CD4-positive, alpha-beta T cell (primary cell): ENCODE measurements at regions of chr6 and their contacts with region 1.

Region 1: DNA sequence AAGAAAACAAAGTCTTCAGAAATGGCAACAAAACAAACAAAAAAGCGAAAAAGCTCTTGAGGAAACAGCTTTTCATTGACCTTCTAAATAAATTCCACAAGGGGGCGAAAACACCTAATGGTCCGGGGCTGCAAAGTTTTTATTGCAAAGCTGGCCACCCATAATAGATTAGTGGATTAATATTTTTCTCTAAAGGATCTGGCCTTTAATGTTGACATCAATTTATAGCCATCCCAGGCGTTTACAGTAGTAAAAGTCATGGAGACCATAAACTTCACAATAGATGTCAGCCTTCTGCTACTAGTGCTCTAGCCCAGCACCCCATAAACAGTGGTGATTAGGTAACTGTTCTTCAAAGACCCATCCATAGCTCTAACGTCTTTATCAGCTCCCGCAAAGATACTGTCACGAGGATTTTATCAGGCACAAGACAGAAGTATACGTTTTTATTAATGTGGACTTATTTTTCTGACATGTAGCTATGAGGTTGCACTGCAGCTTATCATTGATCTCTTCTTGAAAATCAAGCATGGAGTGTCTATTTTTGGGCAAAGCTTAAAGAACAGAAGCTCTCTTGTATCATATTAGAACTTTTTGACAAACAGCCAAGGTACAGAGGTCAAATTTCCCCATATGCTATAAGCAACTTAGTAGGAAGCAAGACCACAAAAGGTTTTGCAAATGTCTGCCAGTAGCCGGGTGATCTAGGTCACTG is 4.7 kb downstream of the CITED2 start:
- DNase-seq: peak in 4 of 14 experiments; percentile 40 to 71 (median 64)
- ATAC-seq: no peak
- H3K4me3 ChIP-seq: no peak overlapping the region
- H3K4me3 Mint-ChIP-seq: peak overlapping the region; percentile 98
- H3K27ac ChIP-seq: peak overlapping the region; percentile 14 to 33
- H3K27ac Mint-ChIP-seq: peak overlapping the region; percentile 97
- H3K4me1 ChIP-seq: peaks cover 20% of the 10 kb centered on the region
- H3K4me1 Mint-ChIP-seq: peaks cover 50% of the 10 kb centered on the region
- H3K27me3 ChIP-seq: no peaks in the 10 kb centered on the region
- H3K27me3 Mint-ChIP-seq: no peaks in the 10 kb centered on the region
- CTCF ChIP-seq: peak; percentile 82

Region 2: DNA sequence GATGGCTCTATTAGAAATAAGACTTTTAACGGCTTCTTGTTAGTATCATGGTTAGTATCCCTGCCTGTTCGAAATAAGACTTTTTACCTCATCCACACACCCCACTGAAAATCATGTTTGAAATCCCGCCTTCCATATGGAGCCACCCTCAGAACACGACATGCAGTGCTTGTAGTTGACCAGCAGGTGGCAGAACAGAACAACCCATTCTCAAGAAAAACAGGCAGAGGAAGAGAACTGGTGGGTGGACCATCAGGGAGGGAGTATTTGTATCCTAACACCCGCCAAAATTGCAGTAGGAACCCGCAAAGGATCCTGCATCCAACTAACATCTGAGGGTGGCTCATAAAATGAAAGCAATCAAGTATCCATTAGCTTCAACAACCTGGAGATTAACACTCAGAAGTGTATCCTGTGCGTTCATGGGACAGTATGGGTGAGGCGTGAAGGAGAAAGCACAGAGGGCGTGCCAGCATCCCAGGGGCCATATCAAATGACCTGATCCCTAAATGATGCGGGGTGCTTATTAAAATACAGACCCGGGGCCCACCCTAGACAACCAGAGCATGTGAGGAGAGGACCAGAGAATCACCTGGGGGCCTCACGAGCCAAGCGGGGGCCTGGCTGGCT is 780.8 kb before region 1 on chr6:
- CTCF ChIA-PET with region 1: no interaction called
- POLR2A ChIA-PET with region 1: no interaction called
- intact Hi-C with region 1: loop called (anchors 2 kb)
- DNase-seq: peak; percentile 9 to 80 (median 28)
- ATAC-seq: peak; percentile 39
- H3K4me3 ChIP-seq: no peak overlapping the region
- H3K4me3 Mint-ChIP-seq: no peak overlapping the region
- H3K27ac ChIP-seq: no peak overlapping the region
- H3K27ac Mint-ChIP-seq: no peak overlapping the region
- H3K4me1 ChIP-seq: peaks cover 6% of the 10 kb centered on the region
- H3K4me1 Mint-ChIP-seq: peaks cover 20% of the 10 kb centered on the region
- H3K27me3 ChIP-seq: no peaks in the 10 kb centered on the region
- H3K27me3 Mint-ChIP-seq: no peaks in the 10 kb centered on the region
- CTCF ChIP-seq: peak; percentile 96

Region 3: DNA sequence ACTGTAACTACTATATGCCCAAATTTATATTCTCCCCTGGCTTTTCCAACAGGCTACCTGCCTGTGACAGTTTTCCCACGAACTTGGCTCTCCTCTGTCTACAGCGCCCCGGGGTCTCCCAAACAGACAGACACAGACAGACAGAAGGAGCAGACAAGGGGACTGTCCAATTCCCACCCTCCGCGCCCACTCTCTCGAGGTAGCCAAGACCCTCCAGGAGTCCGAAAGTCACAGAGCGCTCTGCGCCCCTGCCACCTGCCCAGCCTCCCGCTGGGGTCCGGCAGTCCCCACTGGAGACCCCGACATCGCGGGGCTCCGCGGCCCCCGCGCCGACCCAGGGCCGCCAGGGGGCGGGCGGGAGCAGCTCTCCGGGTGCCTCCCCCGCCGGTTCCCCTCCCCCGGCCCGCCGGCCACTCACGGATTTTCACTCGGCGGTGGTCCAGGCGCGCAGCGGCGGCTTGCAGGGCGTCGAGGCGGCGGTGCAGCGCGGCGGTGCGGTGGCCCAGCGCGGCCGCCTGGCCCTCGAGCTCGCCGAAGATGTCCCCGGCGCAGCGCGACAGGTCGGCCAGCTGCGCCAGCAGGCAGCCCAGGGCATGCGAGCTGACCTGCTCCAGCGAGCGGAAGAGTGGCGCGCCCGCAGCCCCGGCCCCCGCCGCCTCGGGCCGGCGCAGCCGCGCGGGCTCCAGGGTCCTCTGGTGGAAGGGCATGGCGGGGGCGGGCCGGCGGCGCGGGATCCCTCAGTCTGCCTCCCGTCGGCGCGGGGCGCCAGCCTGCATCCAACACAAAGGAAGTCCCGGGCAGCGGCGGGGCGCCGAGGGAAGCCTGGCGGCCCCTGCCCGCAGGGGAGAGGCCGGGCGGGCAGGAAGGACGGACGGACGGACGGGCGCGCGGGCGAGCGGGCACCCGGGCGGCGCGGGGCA is 677.4 kb before region 1 on chr6:
- CTCF ChIA-PET with region 1: no interaction called
- POLR2A ChIA-PET with region 1: interaction called, 5 read pairs
- intact Hi-C with region 1: loop called in 1 of 2 experiments (anchors 5 kb)
- DNase-seq: peak in 11 of 14 experiments; percentile 10 to 61 (median 43)
- ATAC-seq: peak; percentile 64
- H3K4me3 ChIP-seq: no peak overlapping the region
- H3K4me3 Mint-ChIP-seq: peak overlapping the region; percentile 88
- H3K27ac ChIP-seq: no peak overlapping the region
- H3K27ac Mint-ChIP-seq: no peak overlapping the region
- H3K4me1 ChIP-seq: peaks cover 10% of the 10 kb centered on the region
- H3K4me1 Mint-ChIP-seq: peaks cover 7% of the 10 kb centered on the region
- H3K27me3 ChIP-seq: peaks cover 10 to 17% of the 10 kb centered on the region in 2 experiments
- H3K27me3 Mint-ChIP-seq: peaks cover 49% of the 10 kb centered on the region
- CTCF ChIP-seq: peak; percentile 73

Region 4: GRCh38 chr6:139219271-139219729 is 150.4 kb before region 1 on chr6:
- CTCF ChIA-PET with region 1: interaction called, 39 read pairs
- POLR2A ChIA-PET with region 1: interaction called, 43 read pairs
- intact Hi-C with region 1: loop called (anchors 1 kb)
- DNase-seq: peak; percentile 47 to 87 (median 68)
- ATAC-seq: peak; percentile 98
- H3K4me3 ChIP-seq: no peak overlapping the region
- H3K4me3 Mint-ChIP-seq: no peak overlapping the region
- H3K27ac ChIP-seq: no peak overlapping the region
- H3K27ac Mint-ChIP-seq: peak overlapping the region; percentile 1
- H3K4me1 ChIP-seq: peaks cover 8% of the 10 kb centered on the region
- H3K4me1 Mint-ChIP-seq: peaks cover 16% of the 10 kb centered on the region
- H3K27me3 ChIP-seq: no peaks in the 10 kb centered on the region
- H3K27me3 Mint-ChIP-seq: no peaks in the 10 kb centered on the region
- CTCF ChIP-seq: peak; percentile 85

Region 5: DNA sequence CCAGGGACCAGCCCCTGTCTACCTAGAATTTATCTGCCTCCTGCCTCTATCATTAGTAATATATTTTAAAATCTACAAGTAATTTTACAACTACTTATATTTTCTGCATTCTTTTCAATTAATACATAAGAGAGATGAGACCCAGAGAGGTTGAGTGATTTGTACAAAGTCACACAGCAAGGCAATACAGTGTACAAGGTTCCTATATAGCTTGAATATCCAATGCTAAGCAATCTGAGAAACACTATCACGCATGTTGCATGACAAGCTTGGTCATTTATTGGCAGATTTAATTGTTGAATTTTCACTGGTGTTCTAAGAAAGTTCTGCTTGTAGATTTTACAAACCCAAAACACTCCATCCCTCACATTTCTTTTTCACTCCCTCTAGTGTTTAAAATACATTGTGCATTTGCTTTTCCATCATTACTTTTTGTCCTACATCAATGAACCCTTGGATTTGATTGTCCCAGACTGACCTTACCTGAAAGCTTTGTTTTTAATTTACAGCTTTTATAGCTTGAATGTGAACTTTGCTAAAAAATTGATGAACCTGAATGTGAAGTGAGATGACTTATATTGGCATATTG is 525.6 kb after region 1 on chr6:
- CTCF ChIA-PET with region 1: no interaction called
- POLR2A ChIA-PET with region 1: interaction called, 7 read pairs
- intact Hi-C with region 1: loop called in 1 of 2 experiments (anchors 5 kb)
- DNase-seq: no peak
- ATAC-seq: no peak
- H3K4me3 ChIP-seq: no peak overlapping the region
- H3K4me3 Mint-ChIP-seq: no peak overlapping the region
- H3K27ac ChIP-seq: no peak overlapping the region
- H3K27ac Mint-ChIP-seq: no peak overlapping the region
- H3K4me1 ChIP-seq: no peaks in the 10 kb centered on the region
- H3K4me1 Mint-ChIP-seq: no peaks in the 10 kb centered on the region
- H3K27me3 ChIP-seq: no peaks in the 10 kb centered on the region
- H3K27me3 Mint-ChIP-seq: no peaks in the 10 kb centered on the region
- CTCF ChIP-seq: no peak